HEK293 (cell line): ENCODE measurements at regions of chr10 and their contacts with region 1.

Region 1: GRCh38 chr10:88687853-88688467 is 18.1 kb upstream of the LIPK start:
- H3K4me3 ChIP-seq: no peak overlapping the region
- H3K27ac ChIP-seq: no peak overlapping the region
- H3K4me1 ChIP-seq: no peaks in the 10 kb centered on the region
- CTCF ChIP-seq: no peak

Region 2: DNA sequence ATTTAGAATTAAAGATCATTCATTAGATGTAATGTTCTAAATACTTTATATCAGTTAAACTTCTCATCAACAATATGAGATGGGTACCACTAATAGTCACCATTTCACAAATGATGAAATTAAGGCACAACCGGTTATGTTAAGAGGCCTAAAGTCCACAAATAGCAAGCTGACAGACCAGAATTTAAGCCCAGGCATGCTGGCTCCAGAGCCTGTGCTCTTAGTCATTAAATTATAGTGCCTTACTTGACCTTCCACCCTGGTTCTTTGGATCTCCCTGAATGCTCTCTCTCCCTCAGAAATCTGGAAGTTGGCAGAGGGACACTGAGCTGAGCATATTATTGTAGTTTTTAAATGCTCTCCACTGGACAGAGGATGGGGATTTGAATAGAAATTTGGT is 75.5 kb after region 1 on chr10:
- CTCF ChIA-PET with region 1: interaction called, 10 read pairs
- POLR2A ChIA-PET with region 1: no interaction called
- H3K4me3 ChIP-seq: no peak overlapping the region
- H3K27ac ChIP-seq: no peak overlapping the region
- H3K4me1 ChIP-seq: peaks cover 3% of the 10 kb centered on the region
- CTCF ChIP-seq: no peak